Endothelial cell of umbilical vein (primary cell): ENCODE measurements at regions of chr19 and their contacts with region 1.

Region 1: DNA sequence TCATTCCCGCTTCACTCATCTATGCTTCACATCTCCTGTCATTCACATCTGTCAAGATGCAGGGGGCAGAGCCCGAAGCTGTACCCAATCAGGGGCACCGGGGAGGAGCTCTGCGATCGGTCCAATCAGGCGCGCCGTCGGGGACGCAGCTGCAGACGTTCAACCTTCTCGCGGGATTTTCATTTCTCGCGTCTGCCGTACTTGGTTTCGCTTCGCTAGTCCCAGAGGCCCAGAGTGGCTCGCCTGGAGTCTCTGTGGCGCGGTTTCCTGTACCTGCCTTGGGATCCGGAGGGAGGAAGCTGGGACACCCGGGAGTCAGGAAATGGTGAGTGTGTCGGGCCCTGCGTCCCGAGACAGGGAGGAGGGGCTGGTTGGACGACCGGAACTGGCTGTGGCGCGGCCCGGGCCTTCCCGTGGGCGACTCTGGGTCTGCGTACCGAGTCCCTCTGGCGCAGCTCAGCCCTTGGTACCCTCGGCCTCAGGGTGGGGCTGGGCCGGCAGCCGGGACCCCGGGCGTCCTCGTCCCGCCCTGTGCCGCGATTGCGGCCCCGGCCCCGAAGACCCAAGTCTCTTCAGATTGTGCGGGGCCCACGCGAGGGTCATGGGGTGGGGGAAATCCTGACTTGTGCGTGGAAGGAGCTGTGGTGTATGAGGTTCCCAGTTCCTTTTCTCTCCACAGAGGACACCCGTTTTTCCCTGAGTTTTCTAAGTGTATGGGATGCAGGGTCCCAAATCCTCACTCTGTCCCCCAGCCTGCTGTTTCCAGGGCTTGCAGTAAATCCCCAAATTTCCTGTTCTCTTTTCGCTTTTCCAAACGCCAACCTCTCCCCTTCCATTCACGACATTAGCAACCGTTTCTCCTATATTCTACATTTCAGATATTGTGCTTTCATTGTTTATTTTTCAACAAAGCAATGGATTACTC is at the start of gene ZNF136:
- DNase-seq: peak; percentile 96
- H3K4me3 ChIP-seq: peak within 1 kb of the TSS; percentile 57 to 86 (median 67)
- H3K27ac ChIP-seq: peak within 1 kb of the TSS; percentile 93
- H3K4me1 ChIP-seq: peaks cover 9% of the 10 kb centered on the region
- H3K27me3 ChIP-seq: no peaks in the 10 kb centered on the region
- CTCF ChIP-seq: no peak
- POLR2A ChIP-seq: peak; percentile 70
- total RNA-seq, gene ZNF136: 3.5 and 4.0 TPM in 2 replicates

Region 2: DNA sequence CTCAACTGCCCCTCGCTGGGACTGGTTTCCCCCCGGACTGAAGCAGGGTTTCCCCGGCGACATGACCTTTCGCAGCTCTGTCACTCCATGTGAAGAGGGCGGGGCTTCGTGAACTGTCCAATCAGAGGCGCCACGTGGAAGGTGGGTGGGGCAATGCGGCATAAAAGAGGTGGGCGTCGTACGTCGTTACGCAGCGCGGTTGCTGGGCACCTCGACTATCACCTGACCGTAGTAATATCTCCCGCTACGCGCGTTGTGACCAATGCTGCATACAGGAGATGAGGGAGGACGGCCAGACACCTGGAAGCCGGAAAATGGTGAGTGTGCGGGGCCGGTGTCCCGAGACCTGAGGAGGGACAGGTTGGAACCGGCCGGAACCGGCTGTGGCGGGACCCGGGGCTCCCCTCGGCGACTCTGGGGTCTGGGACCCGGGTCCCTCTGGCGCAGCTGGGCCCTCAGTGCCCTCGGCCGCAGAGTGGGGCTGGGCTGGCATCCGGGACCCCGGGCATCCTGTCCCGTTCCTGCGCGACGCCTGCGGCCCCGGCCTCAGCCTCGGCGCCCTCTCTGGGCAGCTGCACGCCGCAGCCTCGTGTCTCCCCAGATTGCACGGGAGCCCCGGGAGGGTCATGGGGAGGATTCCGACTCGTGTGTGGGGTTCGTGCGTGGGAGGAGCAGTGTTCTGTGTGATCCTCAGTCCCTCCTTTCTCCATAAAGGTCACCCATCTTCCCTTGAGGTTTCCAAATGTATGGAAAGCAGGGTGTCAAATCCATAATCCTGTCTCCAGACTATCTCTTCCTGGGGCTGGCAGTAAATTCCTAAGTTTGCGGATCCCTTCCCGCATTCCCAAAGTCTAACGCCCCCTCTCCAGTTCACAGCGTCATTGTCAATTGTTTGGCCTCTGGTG is 31.9 kb after region 1 on chr19:
- CTCF ChIA-PET with region 1: no interaction called
- POLR2A ChIA-PET with region 1: no interaction called
- dilution Hi-C with region 1: no loop called
- intact Hi-C with region 1: no loop called
- DNase-seq: peak; percentile 6
- H3K4me3 ChIP-seq: peak overlapping the region in 1 of 3 experiments; percentile 6
- H3K27ac ChIP-seq: no peak overlapping the region
- H3K4me1 ChIP-seq: no peaks in the 10 kb centered on the region
- H3K27me3 ChIP-seq: no peaks in the 10 kb centered on the region
- CTCF ChIP-seq: no peak
- POLR2A ChIP-seq: no peak

Region 3: DNA sequence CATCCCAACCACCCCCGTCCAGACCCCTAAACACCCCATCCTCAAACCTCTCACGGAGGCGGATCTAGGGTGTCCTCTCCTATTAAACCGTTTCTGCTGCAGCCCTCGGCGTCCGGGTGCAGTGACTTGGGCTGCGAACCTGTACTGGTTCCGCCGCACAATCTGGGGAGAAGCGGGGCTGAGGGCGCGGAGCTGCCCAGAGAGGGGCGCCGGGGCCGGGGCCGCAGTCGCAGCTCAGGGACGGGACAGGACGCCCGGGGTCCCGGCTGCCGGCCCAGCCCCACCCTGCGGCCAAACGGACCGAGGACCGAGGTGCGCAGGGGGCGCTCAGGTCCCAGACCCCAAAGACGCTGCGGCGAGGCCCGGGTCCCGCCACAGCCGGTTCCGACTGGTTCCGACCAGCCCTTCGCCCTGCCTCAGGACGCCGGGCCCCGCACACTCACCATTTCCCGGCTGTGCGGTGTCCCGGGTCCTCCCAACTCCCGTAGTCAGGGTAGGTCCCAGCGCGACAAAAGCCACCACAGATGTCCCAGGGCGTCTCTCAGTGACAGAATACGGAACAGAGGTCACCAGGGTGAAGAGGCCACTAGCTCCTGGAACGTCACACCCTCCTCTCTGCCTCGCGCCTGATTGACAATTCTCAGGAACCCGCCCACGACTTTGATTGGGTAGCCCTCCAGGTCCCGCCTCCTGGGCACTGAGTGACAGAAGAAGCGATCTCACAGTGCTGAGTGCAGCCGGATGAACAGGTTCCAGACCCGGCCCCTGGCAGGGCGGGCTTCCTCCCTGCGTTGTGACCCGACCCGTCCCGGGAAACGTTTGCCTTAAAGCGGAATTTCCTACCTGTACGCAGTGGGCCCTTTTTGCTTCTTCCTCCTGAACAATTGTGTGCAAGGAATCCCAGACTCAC is 131.4 kb after region 1 on chr19 and contains the start of gene ZNF44:
- CTCF ChIA-PET with region 1: no interaction called
- POLR2A ChIA-PET with region 1: interaction called, 7 read pairs
- dilution Hi-C with region 1: no loop called
- intact Hi-C with region 1: loop called (anchors 1 kb)
- DNase-seq: peak; percentile 95
- H3K4me3 ChIP-seq: peak within 1 kb of the TSS; percentile 43 to 91 (median 63)
- H3K27ac ChIP-seq: peak within 1 kb of the TSS; percentile 56
- H3K4me1 ChIP-seq: peaks cover 3% of the 10 kb centered on the region
- H3K27me3 ChIP-seq: no peaks in the 10 kb centered on the region
- CTCF ChIP-seq: no peak
- POLR2A ChIP-seq: peak; percentile 51
- total RNA-seq, gene ZNF44: 5.2 and 7.4 TPM in 2 replicates

Region 4: GRCh38 chr19:12551060-12551832 is 388.1 kb after region 1 on chr19 and contains the start of gene ZNF564:
- CTCF ChIA-PET with region 1: no interaction called
- POLR2A ChIA-PET with region 1: no interaction called
- dilution Hi-C with region 1: no loop called
- intact Hi-C with region 1: loop called (anchors 2 kb)
- DNase-seq: peak; percentile 98
- H3K4me3 ChIP-seq: peak within 1 kb of the TSS; percentile 10 to 64 (median 62)
- H3K27ac ChIP-seq: peak within 1 kb of the TSS; percentile 73
- H3K4me1 ChIP-seq: no peaks in the 10 kb centered on the region
- H3K27me3 ChIP-seq: no peaks in the 10 kb centered on the region
- CTCF ChIP-seq: no peak
- POLR2A ChIP-seq: peak; percentile 71
- total RNA-seq, gene ZNF564: 6.5 and 7.1 TPM in 2 replicates

Region 5: GRCh38 chr19:12666265-12667048 is 503.3 kb after region 1 on chr19 and contains the starts of genes MAN2B1 and WDR83:
- CTCF ChIA-PET with region 1: no interaction called
- POLR2A ChIA-PET with region 1: no interaction called
- dilution Hi-C with region 1: no loop called
- intact Hi-C with region 1: loop called (anchors 5 kb)
- DNase-seq: peak; percentile 82
- H3K4me3 ChIP-seq: peak within 1 kb of the TSS; percentile 60 to 73 (median 67)
- H3K27ac ChIP-seq: peak within 1 kb of the TSS; percentile 38
- H3K4me1 ChIP-seq: peaks cover 20% of the 10 kb centered on the region
- H3K27me3 ChIP-seq: no peaks in the 10 kb centered on the region
- CTCF ChIP-seq: no peak
- POLR2A ChIP-seq: peak; percentile 49
- total RNA-seq, gene MAN2B1: 73.0 and 76.8 TPM in 2 replicates
- total RNA-seq, gene WDR83: 10.9 and 11.8 TPM in 2 replicates